ENCODE measurements at regions of chr14 and their contacts with region 1.

Region 1: DNA sequence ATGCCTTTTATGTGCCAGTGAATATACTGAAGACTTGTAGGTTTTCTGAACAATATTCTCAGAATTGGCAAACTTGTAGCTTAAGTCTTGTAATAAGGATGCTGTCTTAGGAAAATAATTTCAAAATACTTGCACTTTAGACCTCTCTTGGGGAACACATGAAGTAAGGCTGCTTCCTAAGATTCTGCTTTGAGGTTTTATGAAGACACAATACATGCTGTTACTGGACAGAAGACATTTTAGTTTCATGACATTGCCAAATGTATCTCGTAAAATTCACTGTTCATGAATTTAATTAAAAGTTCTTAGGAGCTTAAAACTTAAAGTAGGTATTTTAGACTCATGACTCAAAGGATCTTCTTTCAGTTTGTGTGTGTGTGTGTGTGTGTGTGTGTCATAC is 80.7 kb downstream of the RAD51B start:
- DNase-seq: no peak
- H3K4me3 ChIP-seq: no peak overlapping the region
- H3K4me3 Mint-ChIP-seq: no peak overlapping the region
- H3K27ac Mint-ChIP-seq: no peak overlapping the region
- H3K4me1 ChIP-seq: no peaks in the 10 kb centered on the region
- H3K4me1 Mint-ChIP-seq: no peaks in the 10 kb centered on the region
- H3K27me3 ChIP-seq: no peaks in the 10 kb centered on the region
- H3K27me3 Mint-ChIP-seq: no peaks in the 10 kb centered on the region
- CTCF ChIP-seq: no peak

Region 2: GRCh38 chr14:67532998-67533753 is 367.1 kb before region 1 on chr14 and contains the start of gene PLEKHH1:
- CTCF ChIA-PET with region 1: interaction called, 10 read pairs
- POLR2A ChIA-PET with region 1: no interaction called
- intact Hi-C with region 1: no loop called
- DNase-seq: peak; percentile 84 to 86
- H3K4me3 ChIP-seq: peak within 1 kb of the TSS; percentile 87
- H3K4me3 Mint-ChIP-seq: peak within 1 kb of the TSS; percentile 79
- H3K27ac Mint-ChIP-seq: no peak within 1 kb of the TSS
- H3K4me1 ChIP-seq: peaks cover 8% of the 10 kb centered on the region
- H3K4me1 Mint-ChIP-seq: no peaks in the 10 kb centered on the region
- H3K27me3 ChIP-seq: no peaks in the 10 kb centered on the region
- H3K27me3 Mint-ChIP-seq: no peaks in the 10 kb centered on the region
- CTCF ChIP-seq: no peak
- total RNA-seq, gene PLEKHH1: 32.4 and 41.2 TPM in 2 replicates

Region 3: GRCh38 chr14:67881225-67881624 is 19.0 kb before region 1 on chr14:
- CTCF ChIA-PET with region 1: no interaction called
- POLR2A ChIA-PET with region 1: no interaction called
- intact Hi-C with region 1: no loop called
- DNase-seq: no peak
- H3K4me3 ChIP-seq: no peak overlapping the region
- H3K4me3 Mint-ChIP-seq: no peak overlapping the region
- H3K27ac Mint-ChIP-seq: no peak overlapping the region
- H3K4me1 ChIP-seq: no peaks in the 10 kb centered on the region
- H3K4me1 Mint-ChIP-seq: no peaks in the 10 kb centered on the region
- H3K27me3 ChIP-seq: no peaks in the 10 kb centered on the region
- H3K27me3 Mint-ChIP-seq: no peaks in the 10 kb centered on the region
- CTCF ChIP-seq: no peak

Region 4: GRCh38 chr14:67994531-67994930 is 94.3 kb after region 1 on chr14:
- CTCF ChIA-PET with region 1: no interaction called
- POLR2A ChIA-PET with region 1: no interaction called
- intact Hi-C with region 1: no loop called
- DNase-seq: no peak
- H3K4me3 ChIP-seq: no peak overlapping the region
- H3K4me3 Mint-ChIP-seq: no peak overlapping the region
- H3K27ac Mint-ChIP-seq: no peak overlapping the region
- H3K4me1 ChIP-seq: peaks cover 10% of the 10 kb centered on the region
- H3K4me1 Mint-ChIP-seq: peaks cover 11% of the 10 kb centered on the region
- H3K27me3 ChIP-seq: no peaks in the 10 kb centered on the region
- H3K27me3 Mint-ChIP-seq: no peaks in the 10 kb centered on the region
- CTCF ChIP-seq: no peak